ENCODE measurements at regions of chr6 and their contacts with region 1.

Region 1: DNA sequence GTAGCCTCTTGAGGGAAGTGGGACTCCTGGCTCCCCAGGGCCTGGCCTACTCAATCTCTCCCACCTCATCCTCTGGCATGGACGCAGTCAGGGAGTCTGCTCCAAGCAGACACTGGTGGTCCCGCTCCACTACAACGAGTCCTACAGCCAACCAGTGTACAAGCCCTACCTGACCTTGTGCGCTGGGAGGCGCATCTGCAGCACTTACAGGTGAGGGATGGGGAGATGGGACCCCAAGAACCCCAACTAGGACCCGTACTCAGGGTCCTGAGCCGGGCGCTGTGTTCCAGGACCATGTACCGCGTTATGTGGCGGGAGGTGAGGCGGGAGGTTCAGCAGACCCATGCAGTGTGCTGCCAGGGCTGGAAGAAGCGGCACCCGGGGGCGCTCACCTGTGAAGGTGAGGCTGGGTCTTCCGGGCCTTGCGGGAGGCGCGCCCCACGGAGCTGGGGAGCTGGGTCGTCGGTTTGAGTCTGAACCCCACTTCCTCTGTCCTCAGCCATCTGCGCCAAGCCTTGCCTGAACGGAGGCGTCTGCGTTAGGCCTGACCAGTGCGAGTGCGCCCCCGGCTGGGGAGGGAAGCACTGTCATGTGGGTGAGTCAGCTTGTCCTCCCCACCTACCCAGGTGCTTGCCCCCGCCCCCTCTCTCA is 2.1 kb downstream of the EGFL8 start:
- DNase-seq: peak; percentile 88
- ATAC-seq: peak; percentile 93
- H3K4me3 Mint-ChIP-seq: no peak overlapping the region
- H3K27ac Mint-ChIP-seq: no peak overlapping the region
- H3K4me1 Mint-ChIP-seq: peaks cover 11% of the 10 kb centered on the region
- H3K27me3 Mint-ChIP-seq: no peaks in the 10 kb centered on the region
- CTCF ChIP-seq: no peak

Region 2: GRCh38 chr6:32069460-32069859 is 97.1 kb before region 1 on chr6:
- CTCF ChIA-PET with region 1: no interaction called
- POLR2A ChIA-PET with region 1: no interaction called
- DNase-seq: no peak
- ATAC-seq: no peak
- H3K4me3 Mint-ChIP-seq: no peak overlapping the region
- H3K27ac Mint-ChIP-seq: peak overlapping the region; percentile 31; the same call in 1 of the 2 replicates
- H3K4me1 Mint-ChIP-seq: peaks cover 13% of the 10 kb centered on the region
- H3K27me3 Mint-ChIP-seq: no peaks in the 10 kb centered on the region
- CTCF ChIP-seq: no peak

Region 3: DNA sequence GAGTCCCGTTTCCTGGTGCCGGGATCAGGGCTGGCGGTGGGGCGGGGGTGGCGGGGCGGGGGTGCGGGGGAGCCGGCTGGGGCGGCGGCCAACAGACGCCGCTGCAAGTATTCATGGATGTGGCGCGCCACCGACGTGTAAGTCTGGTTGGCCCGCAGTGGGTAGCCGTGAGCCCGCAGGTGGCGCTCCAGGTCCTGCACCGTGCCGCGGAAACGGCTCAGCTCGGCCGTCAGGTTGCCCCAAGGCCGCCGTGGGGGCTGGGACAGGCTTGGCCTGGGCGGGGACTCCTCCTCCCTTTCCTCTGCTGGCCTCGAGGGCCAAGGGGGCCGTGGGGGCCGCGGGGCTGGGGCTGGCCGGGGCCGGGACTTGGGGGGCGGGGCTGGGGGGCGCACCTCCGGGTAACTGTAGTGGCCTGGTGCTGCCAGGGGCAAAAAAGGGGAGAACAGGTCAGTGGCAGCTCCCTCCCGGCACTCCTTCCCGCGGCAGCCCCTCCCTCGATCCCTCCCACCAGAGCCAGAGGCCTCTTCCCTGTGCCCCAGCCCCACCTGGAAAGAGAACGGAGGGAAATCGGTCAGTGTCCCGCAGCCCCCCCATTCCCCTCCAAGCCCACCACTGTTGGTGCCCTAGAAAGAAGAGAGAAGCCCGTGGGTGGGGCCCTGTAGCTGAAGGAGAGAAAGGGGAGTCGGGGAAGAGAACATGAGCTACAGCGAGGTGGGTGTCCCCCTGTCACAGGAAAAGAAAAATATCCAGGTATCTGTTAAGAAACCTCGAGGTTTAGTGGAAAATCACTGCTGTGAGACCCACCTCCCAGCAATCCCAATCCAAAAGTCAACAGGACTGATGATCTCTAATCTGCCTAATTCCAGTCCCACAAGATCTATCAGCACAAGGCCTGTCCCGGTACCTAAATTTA is 78.7 kb before region 1 on chr6:
- CTCF ChIA-PET with region 1: interaction called, 13 read pairs
- POLR2A ChIA-PET with region 1: no interaction called
- DNase-seq: peak; percentile 93
- ATAC-seq: peak; percentile 94
- H3K4me3 Mint-ChIP-seq: peak overlapping the region; percentile 53
- H3K27ac Mint-ChIP-seq: no peak overlapping the region
- H3K4me1 Mint-ChIP-seq: peaks cover 16% of the 10 kb centered on the region
- H3K27me3 Mint-ChIP-seq: peaks cover 13% of the 10 kb centered on the region
- CTCF ChIP-seq: 0 out of 2 replicates have a peak, but pooled peaks have one; percentile 27

Region 4: DNA sequence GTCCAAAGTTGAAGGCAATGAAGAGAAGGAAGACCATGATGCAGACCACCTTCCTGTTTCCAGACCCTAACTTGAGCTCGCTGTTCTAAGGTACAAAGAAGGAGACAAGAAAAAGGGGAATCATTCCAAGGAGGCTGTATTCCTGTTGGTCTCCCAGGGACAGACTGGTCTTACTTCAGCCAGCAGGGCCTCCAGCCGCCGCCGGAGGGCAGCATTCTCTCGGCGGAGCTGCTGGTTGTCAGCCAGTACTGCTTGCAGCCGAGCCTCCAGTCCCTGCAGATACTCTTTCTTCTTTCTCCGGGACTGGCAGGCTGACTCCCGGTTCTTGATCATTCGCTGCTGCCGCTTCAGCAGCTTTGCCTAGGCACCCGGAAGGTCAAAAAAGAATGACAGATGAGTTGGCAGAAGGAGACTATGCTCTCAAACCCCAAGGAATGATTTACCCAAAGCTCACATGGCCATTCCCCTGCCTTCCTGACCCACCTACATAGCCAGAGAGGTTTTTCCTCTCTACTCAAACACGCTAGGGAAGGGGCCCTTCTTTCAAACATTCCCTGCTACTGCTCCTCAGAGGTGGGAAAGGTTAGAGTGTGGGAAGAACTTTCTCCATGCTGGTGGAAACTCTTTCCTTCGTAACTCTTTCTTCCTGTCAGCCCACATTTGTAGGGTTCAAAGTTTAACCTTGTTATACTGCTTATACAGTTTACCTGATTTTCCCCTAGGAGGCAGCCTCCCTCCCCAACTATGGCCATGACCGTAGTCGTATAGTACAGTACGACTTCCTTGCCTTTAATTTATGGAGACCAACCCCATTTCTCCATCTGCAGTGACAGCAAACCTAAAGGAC is 47.5 kb before region 1 on chr6:
- CTCF ChIA-PET with region 1: interaction called, 47 read pairs
- POLR2A ChIA-PET with region 1: no interaction called
- DNase-seq: peak; percentile 91
- ATAC-seq: peak; percentile 89
- H3K4me3 Mint-ChIP-seq: no peak overlapping the region
- H3K27ac Mint-ChIP-seq: peak overlapping the region; percentile 81; the same call in 1 of the 2 replicates
- H3K4me1 Mint-ChIP-seq: no peaks in the 10 kb centered on the region
- H3K27me3 Mint-ChIP-seq: no peaks in the 10 kb centered on the region
- CTCF ChIP-seq: peak; percentile 67

Region 5: GRCh38 chr6:32127717-32128592 is 38.6 kb before region 1 on chr6 and contains the start of gene ATF6B:
- CTCF ChIA-PET with region 1: interaction called, 25 read pairs
- POLR2A ChIA-PET with region 1: no interaction called
- DNase-seq: peak; percentile 96
- ATAC-seq: peak; percentile 93
- H3K4me3 Mint-ChIP-seq: peak within 1 kb of the TSS; percentile 99
- H3K27ac Mint-ChIP-seq: peak within 1 kb of the TSS; percentile 99
- H3K4me1 Mint-ChIP-seq: peaks cover 23% of the 10 kb centered on the region
- H3K27me3 Mint-ChIP-seq: no peaks in the 10 kb centered on the region
- CTCF ChIP-seq: no peak
- total RNA-seq, gene ATF6B: 46.1 to 49.1 TPM (median 47.5 TPM) in 3 replicates

Region 6: GRCh38 chr6:32148289-32149091 is 18.0 kb before region 1 on chr6:
- CTCF ChIA-PET with region 1: interaction called, 20 read pairs
- POLR2A ChIA-PET with region 1: no interaction called
- DNase-seq: peak; percentile 96
- ATAC-seq: peak; percentile 74
- H3K4me3 Mint-ChIP-seq: peak overlapping the region; percentile 95
- H3K27ac Mint-ChIP-seq: peak overlapping the region; percentile 12
- H3K4me1 Mint-ChIP-seq: peaks cover 51% of the 10 kb centered on the region
- H3K27me3 Mint-ChIP-seq: peaks cover 65% of the 10 kb centered on the region
- CTCF ChIP-seq: peak; percentile 46; the same call in 1 of the 2 replicates

Region 7: DNA sequence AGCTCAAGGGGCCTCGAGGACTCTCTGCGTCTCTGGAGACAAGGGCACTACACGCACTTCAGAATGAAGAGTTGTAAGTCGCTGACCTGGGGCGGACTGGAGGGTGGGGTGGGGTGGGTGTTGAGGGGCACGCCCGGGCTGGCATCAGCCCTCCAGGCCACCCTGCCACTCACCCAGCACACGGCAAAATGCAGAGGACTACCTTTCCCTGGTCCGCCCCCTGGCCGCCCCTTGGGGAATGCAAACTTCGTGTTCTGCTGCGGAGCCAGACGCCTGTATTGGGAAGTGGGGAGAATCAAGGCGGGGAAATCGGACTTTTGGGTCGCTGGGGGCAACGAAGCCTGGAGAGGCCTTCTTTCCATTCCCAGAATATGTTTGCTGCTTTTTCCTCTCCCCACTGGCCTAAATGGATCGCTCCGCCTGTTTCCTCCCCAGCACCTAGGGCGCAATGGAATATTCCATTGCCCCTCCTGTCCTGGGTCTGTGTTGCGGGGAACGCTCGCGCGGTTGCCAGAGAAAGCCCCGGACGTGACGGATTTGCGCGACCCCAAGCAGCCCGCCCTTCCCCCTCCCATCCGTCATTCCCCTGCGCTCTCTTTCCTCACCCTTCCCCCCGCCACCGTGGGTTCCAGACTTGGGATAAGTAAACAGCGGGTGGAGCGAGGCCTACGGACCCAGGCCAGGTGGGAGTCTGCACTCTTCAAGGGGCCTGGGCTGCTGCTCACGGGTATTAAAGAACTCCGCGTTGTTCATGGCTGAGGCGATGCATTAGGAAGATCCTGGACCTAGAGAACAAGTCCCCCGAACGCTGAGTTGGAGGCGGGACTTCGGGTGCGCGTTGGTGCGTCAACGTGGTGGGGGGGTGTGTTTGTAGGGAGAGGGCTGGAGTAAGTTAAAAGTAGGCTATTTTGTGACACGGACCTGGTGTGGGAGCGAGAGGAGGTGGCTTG is 12.7 kb before region 1 on chr6 and contains the start of gene PPT2:
- CTCF ChIA-PET with region 1: interaction called, 20 read pairs
- POLR2A ChIA-PET with region 1: interaction called, 3 read pairs
- DNase-seq: peak; percentile 89
- ATAC-seq: peak; percentile 54
- H3K4me3 Mint-ChIP-seq: peak within 1 kb of the TSS; percentile 100
- H3K27ac Mint-ChIP-seq: peak within 1 kb of the TSS; percentile 99
- H3K4me1 Mint-ChIP-seq: peaks cover 35% of the 10 kb centered on the region
- H3K27me3 Mint-ChIP-seq: peaks cover 39% of the 10 kb centered on the region
- CTCF ChIP-seq: no peak
- total RNA-seq, gene PPT2: 30.0 to 33.8 TPM (median 31.6 TPM) in 3 replicates

Region 8: GRCh38 chr6:32177788-32178546 is 11.4 kb after region 1 on chr6 and contains the start of gene RNF5:
- CTCF ChIA-PET with region 1: interaction called, 6 read pairs
- POLR2A ChIA-PET with region 1: interaction called, 15 read pairs
- DNase-seq: peak; percentile 94
- ATAC-seq: peak; percentile 78
- H3K4me3 Mint-ChIP-seq: peak within 1 kb of the TSS; percentile 82
- H3K27ac Mint-ChIP-seq: peak within 1 kb of the TSS; percentile 98
- H3K4me1 Mint-ChIP-seq: peaks cover 38% of the 10 kb centered on the region
- H3K27me3 Mint-ChIP-seq: no peaks in the 10 kb centered on the region
- CTCF ChIP-seq: no peak
- total RNA-seq, gene RNF5: 108 to 114 TPM (median 111 TPM) in 3 replicates

Region 9: DNA sequence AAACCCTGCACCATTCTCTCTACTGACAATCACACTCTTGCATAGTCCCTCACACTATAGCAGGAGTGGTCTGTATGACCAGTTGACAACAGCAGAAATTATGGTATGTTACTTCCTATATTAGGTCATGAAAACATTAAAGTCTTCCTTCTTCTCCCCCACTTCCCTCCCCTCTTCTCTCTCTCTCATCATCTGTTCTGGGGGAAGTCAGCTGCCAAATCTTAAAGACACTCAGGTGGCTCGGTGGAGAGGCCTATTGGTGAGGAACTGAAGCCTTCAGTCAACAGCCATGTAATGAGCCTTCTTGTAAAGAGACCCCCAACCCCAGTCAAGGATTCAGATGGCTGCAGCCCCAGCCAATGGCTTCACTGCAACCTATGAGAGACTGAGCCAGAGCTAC is 216.2 kb after region 1 on chr6:
- CTCF ChIA-PET with region 1: no interaction called
- POLR2A ChIA-PET with region 1: no interaction called
- DNase-seq: no peak
- ATAC-seq: no peak
- H3K4me3 Mint-ChIP-seq: no peak overlapping the region
- H3K27ac Mint-ChIP-seq: no peak overlapping the region
- H3K4me1 Mint-ChIP-seq: no peaks in the 10 kb centered on the region
- H3K27me3 Mint-ChIP-seq: no peaks in the 10 kb centered on the region
- CTCF ChIP-seq: no peak